CD14-positive monocyte (primary cell): ENCODE measurements at regions of chr2 and their contacts with region 1.

Region 1: DNA sequence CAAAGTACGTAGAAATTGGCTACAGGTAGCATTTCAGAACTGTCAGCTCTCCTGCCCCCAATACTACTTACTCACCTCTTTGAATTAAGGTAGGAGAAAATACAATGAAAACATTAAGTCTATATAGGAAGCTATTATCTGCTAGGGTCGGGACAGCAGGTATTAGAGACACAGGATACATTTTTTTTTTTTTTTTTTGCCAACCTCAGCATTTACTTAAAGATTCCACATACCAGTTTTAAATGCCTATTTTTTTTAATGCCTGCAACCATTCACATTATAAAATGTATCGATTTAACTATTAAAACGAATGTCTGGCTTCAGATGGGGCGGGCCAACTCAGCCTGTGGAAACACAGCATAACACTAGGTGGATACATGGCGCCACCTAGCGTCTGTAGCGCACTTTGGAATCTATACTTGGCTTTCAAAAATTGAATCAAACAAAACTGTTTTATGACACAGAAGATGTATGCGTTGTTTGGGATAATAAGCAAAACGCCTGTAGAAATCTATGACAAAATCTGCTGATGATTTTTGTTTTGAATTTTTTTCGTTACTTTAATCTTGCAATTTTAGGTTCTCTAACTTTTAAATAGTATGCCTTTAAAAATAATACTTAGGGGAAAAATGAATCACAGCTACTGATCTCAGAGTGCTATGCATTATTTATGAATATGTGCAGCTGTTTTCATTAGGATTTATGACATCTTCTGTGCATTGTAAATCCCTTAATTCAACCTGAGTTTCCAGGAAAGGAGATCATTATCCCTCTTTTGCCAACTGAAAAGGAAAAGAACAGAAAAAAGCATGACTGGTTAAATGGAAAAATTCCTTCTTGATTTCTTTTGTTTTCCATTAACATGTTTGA is 261.0 kb downstream of the NYAP2 start:
- DNase-seq: peak; percentile 29 to 49 (median 45)
- H3K4me3 ChIP-seq: no peak overlapping the region
- H3K4me3 Mint-ChIP-seq: no peak overlapping the region
- H3K27ac ChIP-seq: no peak overlapping the region
- H3K27ac Mint-ChIP-seq: no peak overlapping the region
- H3K4me1 ChIP-seq: no peaks in the 10 kb centered on the region
- H3K4me1 Mint-ChIP-seq: no peaks in the 10 kb centered on the region
- H3K27me3 ChIP-seq: no peaks in the 10 kb centered on the region
- H3K27me3 Mint-ChIP-seq: peaks cover 4 to 9% (median 6%) of the 10 kb centered on the region in 3 donors
- CTCF ChIP-seq: peak; percentile 91

Region 2: DNA sequence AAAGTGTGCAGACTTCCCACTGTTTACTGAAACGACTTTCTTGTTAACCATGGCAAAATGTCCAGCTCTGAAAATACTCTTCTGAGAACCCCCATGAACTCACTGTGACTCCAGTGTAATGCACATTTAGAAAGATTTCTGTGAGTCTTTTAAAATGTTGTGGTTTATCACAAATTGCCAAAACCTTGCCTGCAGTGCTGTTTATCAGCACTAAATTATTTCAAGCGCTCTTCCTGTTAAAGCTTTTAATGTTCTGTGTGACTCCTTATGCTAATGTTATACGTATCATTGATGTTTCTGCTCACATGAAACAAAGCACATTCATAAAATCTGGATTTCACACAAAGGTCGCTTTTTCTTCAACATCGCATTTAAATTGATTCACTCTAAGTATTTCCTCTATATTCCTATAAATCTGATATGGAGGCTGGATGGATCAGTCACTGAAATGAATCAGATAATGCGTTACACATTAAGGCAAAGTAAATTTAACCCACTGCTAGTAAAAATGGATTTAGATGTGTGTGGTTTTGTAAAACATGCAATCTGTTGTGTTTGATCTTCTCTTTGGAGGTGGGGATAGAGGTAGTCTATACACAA is 260.2 kb after region 1 on chr2:
- intact Hi-C with region 1: no loop called
- DNase-seq: no peak
- H3K4me3 ChIP-seq: no peak overlapping the region
- H3K4me3 Mint-ChIP-seq: no peak overlapping the region
- H3K27ac ChIP-seq: no peak overlapping the region
- H3K27ac Mint-ChIP-seq: no peak overlapping the region
- H3K4me1 ChIP-seq: no peaks in the 10 kb centered on the region
- H3K4me1 Mint-ChIP-seq: no peaks in the 10 kb centered on the region
- H3K27me3 ChIP-seq: peaks cover 0 to 2% of the 10 kb centered on the region in 2 donors
- H3K27me3 Mint-ChIP-seq: peaks cover 0 to 7% (median 2%) of the 10 kb centered on the region in 3 donors
- CTCF ChIP-seq: no peak

Region 3: GRCh38 chr2:227106845-227107759 is 1446.6 kb after region 1 on chr2:
- intact Hi-C with region 1: loop called in 1 of 2 experiments (anchors 10 kb)
- DNase-seq: peak; percentile 8 to 32 (median 26)
- H3K4me3 ChIP-seq: no peak overlapping the region
- H3K4me3 Mint-ChIP-seq: no peak overlapping the region
- H3K27ac ChIP-seq: no peak overlapping the region
- H3K27ac Mint-ChIP-seq: no peak overlapping the region
- H3K4me1 ChIP-seq: no peaks in the 10 kb centered on the region
- H3K4me1 Mint-ChIP-seq: peaks cover 2% of the 10 kb centered on the region
- H3K27me3 ChIP-seq: no peaks in the 10 kb centered on the region
- H3K27me3 Mint-ChIP-seq: peaks cover 0 to 4% (median 3%) of the 10 kb centered on the region in 3 donors
- CTCF ChIP-seq: peak; percentile 59